ENCODE measurements at regions of chr20 and their contacts with region 1.

Region 1: DNA sequence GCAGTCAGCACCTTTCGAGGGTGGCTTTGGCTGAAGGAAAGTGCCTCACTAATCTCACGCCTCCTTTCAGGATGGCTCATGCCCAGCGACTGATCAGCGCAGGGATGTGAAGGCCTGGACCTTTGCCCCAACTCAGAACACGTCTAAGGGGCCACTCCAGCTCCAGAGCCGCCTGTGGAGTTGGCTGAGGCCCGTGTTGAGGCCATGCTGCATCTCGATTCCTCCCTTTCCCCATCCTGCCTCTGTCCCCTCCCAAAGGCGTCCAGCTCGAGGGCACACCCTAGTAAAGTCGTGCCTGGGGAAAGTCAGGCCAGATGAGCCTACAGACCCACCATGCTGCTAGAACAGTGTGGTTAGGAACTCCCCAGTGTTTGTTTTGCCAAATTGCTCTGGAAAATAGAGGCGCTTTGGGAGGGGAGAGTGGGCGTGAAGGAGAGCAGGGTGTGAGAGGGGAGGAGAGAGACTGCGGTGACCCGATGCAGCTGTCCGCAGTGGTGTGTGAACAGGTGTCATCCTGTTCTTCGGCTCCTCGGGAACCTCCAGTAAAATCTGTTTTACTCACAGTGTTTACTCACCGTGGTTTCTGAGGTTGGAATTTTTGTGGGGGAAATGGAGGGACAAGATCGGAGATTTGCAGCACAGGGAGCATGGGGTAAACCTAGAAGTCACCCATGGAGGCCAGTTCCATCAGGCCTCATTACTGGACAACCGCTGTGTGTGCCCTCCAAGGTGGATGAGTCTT is 85.0 kb upstream of the PMEPA1 start:
- DNase-seq: peak; percentile 79
- H3K4me3 ChIP-seq: no peak overlapping the region
- H3K27ac ChIP-seq: no peak overlapping the region
- H3K4me1 ChIP-seq: peaks cover 13% of the 10 kb centered on the region
- H3K27me3 ChIP-seq: no peaks in the 10 kb centered on the region
- CTCF ChIP-seq: no peak

Region 2: DNA sequence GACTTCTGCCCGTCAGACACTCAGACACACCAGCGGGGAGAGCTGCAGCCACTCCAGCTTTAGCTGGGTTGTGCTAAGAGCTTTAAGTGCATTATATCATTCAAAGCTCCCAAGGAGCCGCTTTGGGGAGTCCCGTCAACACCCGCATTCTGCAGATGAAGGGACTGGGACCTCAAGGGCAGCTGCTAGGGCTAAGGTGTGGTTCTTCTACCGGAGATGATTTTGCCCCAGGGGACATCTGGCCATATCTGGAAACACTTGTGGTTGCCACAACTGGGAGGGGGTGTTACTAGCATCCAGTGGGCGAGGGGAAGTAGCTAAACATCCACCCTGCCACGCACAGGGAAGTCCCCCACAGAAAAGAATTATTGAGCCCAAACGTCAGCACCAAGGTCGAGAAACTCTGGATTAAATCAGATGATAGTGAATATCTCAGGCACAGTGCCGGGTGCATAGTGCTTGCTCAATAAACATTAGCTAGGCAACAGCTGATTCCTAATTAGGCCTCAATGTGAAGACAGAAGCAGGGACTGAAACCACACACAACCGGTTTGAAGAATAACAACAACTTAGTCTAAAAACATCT is 114.5 kb before region 1 on chr20:
- CTCF ChIA-PET with region 1: no interaction called
- dilution Hi-C with region 1: no loop called
- in situ Hi-C with region 1: no loop called
- intact Hi-C with region 1: no loop called
- DNase-seq: no peak
- H3K4me3 ChIP-seq: no peak overlapping the region
- H3K27ac ChIP-seq: no peak overlapping the region
- H3K4me1 ChIP-seq: peaks cover 4% of the 10 kb centered on the region
- H3K27me3 ChIP-seq: no peaks in the 10 kb centered on the region
- CTCF ChIP-seq: no peak

Region 3: DNA sequence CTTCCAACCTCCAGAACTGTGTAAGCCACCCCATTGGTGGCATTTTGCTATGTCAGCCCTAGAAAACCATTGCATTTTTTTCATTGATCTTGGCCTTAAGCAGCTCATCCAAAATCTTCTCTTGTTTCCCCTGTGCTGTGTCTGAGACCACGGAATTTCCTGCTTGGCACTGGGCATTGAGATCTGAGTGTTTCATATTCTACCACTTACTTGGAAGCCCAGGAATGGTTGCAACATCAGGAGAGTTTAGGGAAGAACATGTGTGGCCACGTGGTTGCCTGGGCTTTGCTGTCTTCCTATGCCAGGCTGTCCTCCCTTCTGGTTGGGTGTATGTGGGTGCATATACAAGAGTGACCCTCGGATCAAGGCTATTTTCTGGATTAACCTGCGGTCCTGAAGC is 54.4 kb after region 1 on chr20:
- CTCF ChIA-PET with region 1: no interaction called
- dilution Hi-C with region 1: loop called (anchors 5 kb)
- in situ Hi-C with region 1: no loop called
- intact Hi-C with region 1: no loop called
- DNase-seq: no peak
- H3K4me3 ChIP-seq: no peak overlapping the region
- H3K27ac ChIP-seq: no peak overlapping the region
- H3K4me1 ChIP-seq: no peaks in the 10 kb centered on the region
- H3K27me3 ChIP-seq: no peaks in the 10 kb centered on the region
- CTCF ChIP-seq: no peak

Region 4: DNA sequence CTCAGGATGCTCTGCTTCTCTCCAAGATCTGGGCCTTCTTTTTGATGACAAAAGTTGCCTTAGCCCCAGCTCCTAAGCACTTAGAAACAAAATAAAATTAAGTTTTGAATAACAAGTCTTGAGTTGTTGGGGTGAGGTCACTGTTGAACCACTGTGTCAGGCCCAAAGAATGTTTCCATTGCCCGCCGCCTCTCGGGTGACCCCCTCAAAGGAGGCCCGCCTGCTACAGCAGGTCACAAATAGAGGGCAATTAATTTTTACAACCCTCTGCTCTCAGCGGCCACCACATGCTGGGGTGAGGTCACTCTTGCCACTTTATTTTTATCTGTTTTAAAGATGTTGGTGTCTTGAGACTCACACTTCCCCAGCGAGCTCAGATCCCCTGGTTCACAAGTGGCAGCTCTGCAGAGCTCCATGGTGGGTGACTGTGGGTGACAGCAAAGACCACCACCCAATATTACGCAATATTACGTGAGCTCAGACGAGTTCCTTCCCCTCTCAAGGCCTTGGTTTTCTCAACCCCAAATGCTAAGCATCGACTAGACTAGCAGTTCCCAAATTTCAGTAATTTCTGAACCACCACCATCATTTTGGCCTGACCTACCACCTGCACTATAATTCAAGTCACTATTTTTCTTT is 162.8 kb after region 1 on chr20:
- CTCF ChIA-PET with region 1: no interaction called
- dilution Hi-C with region 1: no loop called
- in situ Hi-C with region 1: no loop called
- intact Hi-C with region 1: no loop called
- DNase-seq: no peak
- H3K4me3 ChIP-seq: no peak overlapping the region
- H3K27ac ChIP-seq: no peak overlapping the region
- H3K4me1 ChIP-seq: no peaks in the 10 kb centered on the region
- H3K27me3 ChIP-seq: no peaks in the 10 kb centered on the region
- CTCF ChIP-seq: no peak

Measured in mammary epithelial cell (primary cell).